SK-N-SH (cell line): ENCODE measurements at regions of chr1 and their contacts with region 1.

Region 1: DNA sequence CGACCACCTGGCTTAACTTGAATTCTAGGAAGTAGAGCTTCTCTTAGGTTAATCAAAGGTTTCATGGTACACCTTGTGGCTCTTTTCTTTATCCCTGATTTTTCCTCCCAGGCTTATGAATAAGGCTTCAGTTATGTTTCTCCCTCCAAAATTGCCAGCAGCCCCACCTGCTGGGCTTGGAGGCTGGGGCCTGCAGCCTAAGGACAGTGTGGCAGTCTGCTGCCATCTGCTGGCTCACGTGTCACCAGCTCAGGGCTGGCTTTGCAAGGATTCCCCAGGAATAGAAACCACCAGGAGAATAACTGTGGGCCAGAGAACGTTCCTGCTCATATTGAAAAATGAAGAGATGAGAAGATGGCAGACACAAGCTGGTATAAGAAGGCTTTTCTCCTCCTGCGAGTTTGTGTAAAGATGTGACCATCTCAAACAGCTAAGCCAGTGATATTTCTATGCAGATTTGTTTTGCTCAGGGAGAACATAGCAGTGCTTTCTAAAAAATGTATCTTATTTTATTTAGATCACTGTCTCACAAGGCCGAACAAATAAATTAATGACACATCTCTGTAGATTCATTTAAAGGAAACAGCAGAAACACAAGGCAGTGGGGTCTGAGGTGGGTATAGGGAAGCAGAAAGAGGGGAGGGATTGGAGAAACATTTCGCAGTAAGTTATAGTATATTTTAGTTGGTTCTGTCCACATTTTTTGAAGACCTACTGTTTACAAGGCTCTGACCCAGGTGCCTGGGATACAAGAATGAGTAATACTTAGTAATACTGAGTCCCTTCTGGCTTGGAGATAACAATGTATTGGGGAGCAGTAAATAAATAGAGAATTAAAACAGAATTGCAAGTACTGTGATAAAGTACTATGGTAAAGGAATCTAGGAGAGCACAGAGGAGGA is 291.1 kb upstream of the SGIP1 start:
- DNase-seq: peak; percentile 71
- H3K4me3 ChIP-seq: peak overlapping the region in 1 of 2 experiments; percentile 36; a peak in 1 of 4 replicates
- H3K27ac ChIP-seq: peak overlapping the region; percentile 20 to 91; a peak in 3 of 4 replicates
- H3K4me1 ChIP-seq: peaks cover 39 to 69% of the 10 kb centered on the region in 2 experiments; a peak in 3 of 4 replicates
- H3K27me3 ChIP-seq: no peaks in the 10 kb centered on the region
- CTCF ChIP-seq: peak; percentile 100
- EP300 ChIP-seq: no peak
- RAD21 ChIP-seq: peak; percentile 100

Region 2: DNA sequence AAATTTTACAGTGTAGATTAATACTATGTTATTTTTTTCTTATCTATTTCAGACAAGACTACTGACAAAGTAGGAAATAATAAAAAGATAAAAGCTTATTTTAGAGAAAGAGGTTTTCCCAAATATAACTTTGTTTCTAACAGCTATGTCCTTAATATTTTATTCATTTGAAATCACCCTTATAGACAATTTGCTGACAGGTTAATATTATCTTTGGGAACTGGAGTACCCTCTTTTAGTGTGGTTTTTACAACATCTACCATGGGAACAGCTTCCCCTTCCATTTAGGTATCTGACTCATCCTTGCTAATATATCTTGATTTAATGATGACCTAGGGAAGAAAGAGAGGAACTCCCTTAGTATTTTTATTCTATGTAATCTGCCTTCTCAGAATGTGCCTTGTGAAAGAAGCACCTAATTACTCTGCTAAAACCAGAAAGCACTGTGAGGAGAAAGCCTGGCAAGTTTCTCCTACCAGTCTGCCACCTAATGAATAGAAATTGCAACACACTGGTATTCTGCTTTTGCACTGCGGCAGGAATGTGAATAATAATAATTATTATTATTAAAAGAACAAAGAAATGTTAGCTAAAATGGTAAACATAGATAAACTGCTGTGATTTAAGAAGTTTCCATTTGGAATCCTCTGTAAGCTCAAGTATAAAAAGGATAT is 257.4 kb before region 1 on chr1:
- CTCF ChIA-PET with region 1: interaction called, 203 read pairs
- POLR2A ChIA-PET with region 1: no interaction called
- DNase-seq: no peak
- H3K4me3 ChIP-seq: no peak overlapping the region
- H3K27ac ChIP-seq: no peak overlapping the region
- H3K4me1 ChIP-seq: no peaks in the 10 kb centered on the region
- H3K27me3 ChIP-seq: no peaks in the 10 kb centered on the region
- CTCF ChIP-seq: no peak
- EP300 ChIP-seq: no peak
- RAD21 ChIP-seq: no peak

Region 3: GRCh38 chr1:66168948-66169671 is 73.8 kb before region 1 on chr1:
- CTCF ChIA-PET with region 1: interaction called, 10 read pairs
- POLR2A ChIA-PET with region 1: no interaction called
- DNase-seq: no peak
- H3K4me3 ChIP-seq: no peak overlapping the region
- H3K27ac ChIP-seq: peak overlapping the region in 1 of 2 experiments; percentile 55; a peak in 2 of 4 replicates
- H3K4me1 ChIP-seq: peaks cover 0 to 13% of the 10 kb centered on the region in 2 experiments; a peak in 2 of 4 replicates
- H3K27me3 ChIP-seq: no peaks in the 10 kb centered on the region
- CTCF ChIP-seq: no peak
- EP300 ChIP-seq: no peak
- RAD21 ChIP-seq: no peak

Region 4: DNA sequence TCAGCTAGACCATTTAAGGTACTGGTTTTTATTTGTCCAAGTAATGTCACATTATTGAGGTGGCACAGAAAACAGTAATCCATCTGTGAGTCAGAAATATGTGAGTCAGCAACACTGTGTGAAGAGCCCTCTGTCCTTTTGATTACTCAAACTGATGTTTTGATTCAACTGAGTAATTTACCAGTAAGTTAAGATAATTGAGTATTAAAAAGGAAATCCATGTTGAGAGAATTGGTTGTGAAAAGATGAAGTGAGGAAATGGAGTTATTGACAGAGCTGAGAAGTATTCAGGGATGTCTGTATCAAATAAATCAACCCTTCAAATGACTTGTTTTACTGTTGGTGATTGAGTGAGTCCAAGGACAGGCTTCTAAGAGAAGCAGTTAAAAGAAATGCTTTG is 11.7 kb before region 1 on chr1:
- CTCF ChIA-PET with region 1: interaction called, 56 read pairs
- POLR2A ChIA-PET with region 1: no interaction called
- DNase-seq: no peak
- H3K4me3 ChIP-seq: no peak overlapping the region
- H3K27ac ChIP-seq: peak overlapping the region; percentile 54 to 82; a peak in 3 of 4 replicates
- H3K4me1 ChIP-seq: peaks cover 0 to 8% of the 10 kb centered on the region in 2 experiments; a peak in 2 of 4 replicates
- H3K27me3 ChIP-seq: no peaks in the 10 kb centered on the region
- CTCF ChIP-seq: no peak
- EP300 ChIP-seq: peak in 1 of 2 experiments; percentile 35; a peak in 1 of 4 replicates
- RAD21 ChIP-seq: no peak

Region 5: GRCh38 chr1:66446261-66447001 is 203.5 kb after region 1 on chr1:
- CTCF ChIA-PET with region 1: interaction called, 384 read pairs
- POLR2A ChIA-PET with region 1: interaction called, 5 read pairs
- DNase-seq: peak; percentile 64
- H3K4me3 ChIP-seq: no peak overlapping the region; a peak in 1 of 4 replicates
- H3K27ac ChIP-seq: peak overlapping the region; percentile 21 to 99; a peak in 3 of 4 replicates
- H3K4me1 ChIP-seq: peaks cover 17 to 36% of the 10 kb centered on the region in 2 experiments; a peak in 3 of 4 replicates
- H3K27me3 ChIP-seq: no peaks in the 10 kb centered on the region
- CTCF ChIP-seq: peak; percentile 86
- EP300 ChIP-seq: no peak
- RAD21 ChIP-seq: peak; percentile 98

Region 6: GRCh38 chr1:66464802-66465201 is 221.9 kb after region 1 on chr1:
- CTCF ChIA-PET with region 1: no interaction called
- POLR2A ChIA-PET with region 1: no interaction called
- DNase-seq: no peak
- H3K4me3 ChIP-seq: no peak overlapping the region; a peak in 1 of 4 replicates
- H3K27ac ChIP-seq: peak overlapping the region; percentile 73 to 97
- H3K4me1 ChIP-seq: peaks cover 3 to 25% of the 10 kb centered on the region in 2 experiments
- H3K27me3 ChIP-seq: no peaks in the 10 kb centered on the region
- CTCF ChIP-seq: no peak
- EP300 ChIP-seq: peak in 1 of 2 experiments; percentile 78; a peak in 1 of 4 replicates
- RAD21 ChIP-seq: no peak

Region 7: DNA sequence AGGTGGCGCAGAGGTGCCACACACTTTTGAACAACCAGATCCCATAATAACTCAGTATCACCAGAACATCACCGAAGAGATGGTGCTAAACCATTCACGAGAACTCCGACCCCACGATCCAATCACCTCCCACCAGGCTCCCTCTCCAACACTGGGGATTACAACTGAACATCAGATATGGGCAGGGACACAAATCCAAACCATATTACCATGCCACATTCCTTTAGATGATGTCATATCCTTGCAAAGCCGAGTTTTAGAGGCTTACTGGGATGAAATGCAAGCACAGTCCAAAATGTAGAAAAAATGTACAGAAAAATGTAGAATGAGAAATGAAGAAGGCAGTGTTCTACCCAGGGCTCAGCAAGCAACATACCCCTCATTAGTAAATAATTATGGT is 355.8 kb after region 1 on chr1:
- CTCF ChIA-PET with region 1: no interaction called
- POLR2A ChIA-PET with region 1: no interaction called
- DNase-seq: no peak
- H3K4me3 ChIP-seq: no peak overlapping the region
- H3K27ac ChIP-seq: peak overlapping the region; percentile 62 to 82; a peak in 3 of 4 replicates
- H3K4me1 ChIP-seq: peaks cover 3 to 21% of the 10 kb centered on the region in 2 experiments; a peak in 3 of 4 replicates
- H3K27me3 ChIP-seq: no peaks in the 10 kb centered on the region
- CTCF ChIP-seq: no peak
- EP300 ChIP-seq: peak in 1 of 2 experiments; percentile 35; a peak in 1 of 4 replicates
- RAD21 ChIP-seq: no peak